H1 (cell line): ENCODE measurements at regions of chr1 and their contacts with region 1.

Region 1: GRCh38 chr1:116168277-116169097 is 57.3 kb downstream of the MAB21L3 start:
- DNase-seq: peak; percentile 36 to 92
- H3K4me3 ChIP-seq: peak overlapping the region; percentile 48 to 63 (median 57)
- H3K27ac ChIP-seq: no peak overlapping the region
- H3K4me1 ChIP-seq: peaks cover 3 to 9% (median 6%) of the 10 kb centered on the region in 4 experiments
- H3K27me3 ChIP-seq: peaks cover 0 to 25% (median 19%) of the 10 kb centered on the region in 4 experiments; a peak in 6 of 7 replicates
- CTCF ChIP-seq: peak; percentile 85 to 89 (median 86)
- EP300 ChIP-seq: peak in 1 of 2 experiments; percentile 54; a peak in 1 of 3 replicates
- POLR2A ChIP-seq: peak in 1 of 2 experiments; percentile 18; a peak in 1 of 3 replicates
- RAD21 ChIP-seq: peak; percentile 62 to 68

Region 2: DNA sequence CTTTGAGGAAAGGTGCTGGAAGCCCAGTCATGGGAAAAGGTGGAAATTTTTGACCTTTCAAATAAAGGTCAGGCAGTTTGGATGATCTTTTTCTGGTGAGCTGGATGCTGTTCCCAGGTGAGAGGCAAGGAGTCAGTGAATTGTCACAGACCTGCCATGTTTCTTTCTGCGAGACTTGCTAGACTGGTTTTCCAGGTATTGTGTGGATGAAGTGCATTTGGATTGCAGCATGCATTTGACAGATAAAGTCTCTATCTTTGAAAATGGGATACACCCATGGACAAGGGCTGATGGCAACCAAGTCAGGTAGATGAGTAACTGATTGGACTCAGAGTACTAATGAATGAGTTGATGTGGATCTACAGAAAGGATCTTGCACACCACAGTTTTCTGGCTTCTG is 261.8 kb before region 1 on chr1:
- CTCF ChIA-PET with region 1: no interaction called
- POLR2A ChIA-PET with region 1: no interaction called
- DNase-seq: no peak
- H3K4me3 ChIP-seq: no peak overlapping the region
- H3K27ac ChIP-seq: no peak overlapping the region
- H3K4me1 ChIP-seq: peaks cover 0 to 4% (median 1%) of the 10 kb centered on the region in 4 experiments; a peak in 3 of 7 replicates
- H3K27me3 ChIP-seq: peaks cover 0 to 1% (median 0%) of the 10 kb centered on the region in 4 experiments; a peak in 1 of 7 replicates
- CTCF ChIP-seq: no peak
- EP300 ChIP-seq: no peak
- POLR2A ChIP-seq: no peak
- RAD21 ChIP-seq: no peak

Region 3: GRCh38 chr1:116147972-116148371 is 20.5 kb before region 1 on chr1:
- CTCF ChIA-PET with region 1: interaction called, 14 read pairs
- POLR2A ChIA-PET with region 1: interaction called, 4 read pairs
- DNase-seq: no peak
- H3K4me3 ChIP-seq: no peak overlapping the region
- H3K27ac ChIP-seq: no peak overlapping the region
- H3K4me1 ChIP-seq: 0 out of 7 replicates have a peak, but pooled peaks cover 0 to 2% (median 0%) of the 10 kb centered on the region in 4 experiments
- H3K27me3 ChIP-seq: peaks cover 0 to 6% (median 5%) of the 10 kb centered on the region in 4 experiments; a peak in 4 of 7 replicates
- CTCF ChIP-seq: no peak
- EP300 ChIP-seq: no peak
- POLR2A ChIP-seq: no peak
- RAD21 ChIP-seq: 0 out of 4 replicates have a peak, but pooled peaks have one; percentile 4 to 6

Region 4: GRCh38 chr1:116152950-116153691 is 15.4 kb before region 1 on chr1:
- CTCF ChIA-PET with region 1: interaction called, 14 read pairs
- POLR2A ChIA-PET with region 1: interaction called, 4 read pairs
- DNase-seq: no peak
- H3K4me3 ChIP-seq: no peak overlapping the region
- H3K27ac ChIP-seq: no peak overlapping the region
- H3K4me1 ChIP-seq: 0 out of 7 replicates have a peak, but pooled peaks cover 0 to 2% (median 0%) of the 10 kb centered on the region in 4 experiments
- H3K27me3 ChIP-seq: peaks cover 0 to 6% (median 5%) of the 10 kb centered on the region in 4 experiments; a peak in 4 of 7 replicates
- CTCF ChIP-seq: no peak
- EP300 ChIP-seq: no peak
- POLR2A ChIP-seq: no peak
- RAD21 ChIP-seq: no peak

Region 5: DNA sequence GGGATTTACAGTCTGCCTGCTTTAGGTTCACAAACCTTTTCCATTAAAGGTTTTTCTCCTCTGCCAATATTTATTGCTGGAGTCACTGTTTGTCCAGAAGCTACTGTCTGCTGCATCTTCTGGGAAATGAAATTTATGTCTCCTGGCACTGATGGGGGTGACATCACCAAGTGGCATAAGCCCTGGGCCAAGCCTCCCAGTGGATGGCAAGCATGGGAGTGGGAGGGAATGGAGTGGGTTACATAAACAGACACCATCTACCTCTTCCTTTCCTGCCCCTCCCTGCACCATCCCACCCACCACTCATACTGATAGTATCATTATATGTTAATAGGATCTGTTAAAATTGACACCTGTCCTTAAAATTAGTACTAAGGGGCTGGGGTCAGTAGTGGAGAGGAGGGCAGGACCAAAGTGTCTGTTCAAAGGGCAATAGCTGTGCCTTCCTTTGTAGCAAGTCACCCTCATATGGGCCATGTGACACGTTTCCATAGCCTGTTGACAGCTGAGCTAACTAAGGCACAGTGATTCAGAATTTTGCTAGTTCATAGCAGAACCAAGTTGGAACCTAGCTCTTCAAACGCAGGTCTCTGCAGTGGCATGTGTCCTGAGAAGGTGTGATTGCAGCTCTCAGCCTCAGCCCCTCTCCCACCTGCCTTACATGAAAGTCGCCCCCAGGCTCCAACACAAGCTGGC is 13.7 kb after region 1 on chr1:
- CTCF ChIA-PET with region 1: interaction called, 14 read pairs
- POLR2A ChIA-PET with region 1: no interaction called
- DNase-seq: no peak
- H3K4me3 ChIP-seq: no peak overlapping the region
- H3K27ac ChIP-seq: no peak overlapping the region
- H3K4me1 ChIP-seq: no peaks in the 10 kb centered on the region; a peak in 1 of 7 replicates
- H3K27me3 ChIP-seq: no peaks in the 10 kb centered on the region
- CTCF ChIP-seq: no peak
- EP300 ChIP-seq: no peak
- POLR2A ChIP-seq: no peak
- RAD21 ChIP-seq: no peak